IMR-90 (cell line): ENCODE measurements at regions of chr9 and their contacts with region 1.

Region 1: GRCh38 chr9:16417161-16417560 is 453.3 kb downstream of the BNC2 start:
- DNase-seq: peak; percentile 96
- ATAC-seq: peak; percentile 70
- H3K4me3 ChIP-seq: peak overlapping the region; percentile 20; the same call in 1 of the 2 replicates
- H3K27ac ChIP-seq: peak overlapping the region; percentile 54; the same call in 1 of the 2 replicates
- H3K4me1 ChIP-seq: peaks cover 14% of the 10 kb centered on the region
- H3K27me3 ChIP-seq: no peaks in the 10 kb centered on the region; the same call in 1 of the 2 replicates
- CTCF ChIP-seq: no peak
- POLR2A ChIP-seq: no peak
- RAD21 ChIP-seq: peak; percentile 30

Region 2: GRCh38 chr9:15873569-15874177 is 543.5 kb before region 1 on chr9:
- CTCF ChIA-PET with region 1: no interaction called
- POLR2A ChIA-PET with region 1: no interaction called
- dilution Hi-C with region 1: no loop called
- in situ Hi-C with region 1: no loop called
- intact Hi-C with region 1: loop called (anchors 10 kb)
- DNase-seq: peak; percentile 74
- ATAC-seq: peak; percentile 70; the same call in 1 of the 2 replicates
- H3K4me3 ChIP-seq: no peak overlapping the region
- H3K27ac ChIP-seq: no peak overlapping the region
- H3K4me1 ChIP-seq: no peaks in the 10 kb centered on the region; the same call in 1 of the 2 replicates
- H3K27me3 ChIP-seq: no peaks in the 10 kb centered on the region
- CTCF ChIP-seq: peak; percentile 82
- POLR2A ChIP-seq: no peak
- RAD21 ChIP-seq: peak; percentile 87

Region 3: DNA sequence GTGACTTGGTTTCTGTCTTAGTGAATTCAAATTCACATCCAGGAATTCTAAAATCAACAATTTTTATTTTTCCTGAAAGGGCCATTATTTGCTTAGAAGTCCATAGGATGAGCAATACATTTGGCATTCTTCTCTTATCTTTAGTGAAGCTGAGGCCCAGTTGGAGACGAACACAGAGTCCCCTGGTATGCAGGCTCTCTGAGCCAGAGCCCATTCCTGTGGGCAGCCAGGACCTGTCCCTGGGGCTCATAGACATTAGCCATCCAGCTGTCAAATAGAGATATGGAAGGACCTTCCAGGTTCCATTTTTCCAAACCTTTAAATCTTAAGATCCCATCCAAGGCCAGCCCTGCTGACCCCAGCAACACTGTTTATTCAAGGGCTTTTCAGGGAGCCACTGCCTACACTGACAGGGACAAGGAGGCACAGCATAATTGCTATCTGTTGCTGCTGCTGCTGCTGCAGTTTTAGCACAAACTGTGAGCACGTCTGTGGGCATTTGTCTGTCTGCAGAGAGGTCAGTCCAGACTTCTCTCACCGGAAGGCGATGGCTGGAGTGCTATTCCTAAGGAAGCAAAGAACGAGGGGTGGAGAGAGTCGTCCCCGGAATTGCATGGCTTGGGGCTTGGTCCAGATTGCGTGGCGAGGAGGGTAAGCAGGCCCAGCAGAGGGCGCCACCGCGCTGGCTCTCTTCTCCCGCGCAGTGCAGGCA is 225.3 kb before region 1 on chr9:
- CTCF ChIA-PET with region 1: no interaction called
- POLR2A ChIA-PET with region 1: no interaction called
- dilution Hi-C with region 1: no loop called
- in situ Hi-C with region 1: no loop called
- intact Hi-C with region 1: loop called (anchors 2 kb)
- DNase-seq: peak; percentile 87
- ATAC-seq: peak; percentile 89
- H3K4me3 ChIP-seq: peak overlapping the region; percentile 1; the same call in 1 of the 2 replicates
- H3K27ac ChIP-seq: peak overlapping the region; percentile 92
- H3K4me1 ChIP-seq: peaks cover 28% of the 10 kb centered on the region
- H3K27me3 ChIP-seq: no peaks in the 10 kb centered on the region
- CTCF ChIP-seq: peak; percentile 91
- POLR2A ChIP-seq: no peak
- RAD21 ChIP-seq: peak; percentile 95

Region 4: DNA sequence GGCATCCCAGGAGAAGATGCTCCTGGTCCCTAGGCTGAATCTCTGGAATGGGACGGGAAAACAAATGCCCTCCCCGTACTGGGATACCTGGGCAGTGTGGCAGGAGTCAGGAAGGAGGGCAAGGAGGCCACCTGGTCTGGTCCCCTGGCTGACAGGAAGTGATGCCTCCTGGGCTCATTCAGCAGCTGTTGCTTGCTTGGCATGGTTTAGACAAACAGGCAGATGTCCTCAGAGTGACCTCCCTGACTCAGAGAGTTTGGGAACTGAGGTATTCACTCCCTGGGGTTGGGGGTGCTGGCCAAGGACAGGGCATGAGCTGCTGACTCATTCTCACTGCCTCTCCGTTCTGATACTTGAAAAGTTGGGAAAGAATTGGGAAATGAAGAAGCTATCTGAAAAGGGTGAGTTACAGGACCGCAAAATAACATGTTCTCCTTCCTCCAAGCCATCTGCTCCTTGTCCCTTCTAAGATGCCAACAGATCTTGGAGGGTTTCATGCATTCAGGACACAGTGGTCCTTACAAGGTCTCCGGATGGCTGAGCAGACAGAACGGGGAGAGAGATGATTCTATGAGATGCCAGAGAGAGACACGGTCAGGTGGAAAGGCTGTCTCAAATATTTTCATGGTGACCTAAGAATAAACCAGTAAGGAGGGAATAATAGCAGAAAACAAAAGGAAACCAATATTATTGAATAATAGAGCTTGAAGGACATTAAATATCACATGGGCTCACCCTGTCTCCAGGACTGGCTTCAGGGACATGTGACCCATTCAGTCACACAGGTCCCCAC is 81.2 kb before region 1 on chr9:
- CTCF ChIA-PET with region 1: no interaction called
- POLR2A ChIA-PET with region 1: no interaction called
- dilution Hi-C with region 1: no loop called
- in situ Hi-C with region 1: no loop called
- intact Hi-C with region 1: loop called (anchors 5 kb)
- DNase-seq: peak; percentile 99
- ATAC-seq: peak; percentile 91
- H3K4me3 ChIP-seq: no peak overlapping the region
- H3K27ac ChIP-seq: peak overlapping the region; percentile 96
- H3K4me1 ChIP-seq: peaks cover 18% of the 10 kb centered on the region
- H3K27me3 ChIP-seq: no peaks in the 10 kb centered on the region
- CTCF ChIP-seq: no peak
- POLR2A ChIP-seq: no peak
- RAD21 ChIP-seq: peak; percentile 29

Region 5: DNA sequence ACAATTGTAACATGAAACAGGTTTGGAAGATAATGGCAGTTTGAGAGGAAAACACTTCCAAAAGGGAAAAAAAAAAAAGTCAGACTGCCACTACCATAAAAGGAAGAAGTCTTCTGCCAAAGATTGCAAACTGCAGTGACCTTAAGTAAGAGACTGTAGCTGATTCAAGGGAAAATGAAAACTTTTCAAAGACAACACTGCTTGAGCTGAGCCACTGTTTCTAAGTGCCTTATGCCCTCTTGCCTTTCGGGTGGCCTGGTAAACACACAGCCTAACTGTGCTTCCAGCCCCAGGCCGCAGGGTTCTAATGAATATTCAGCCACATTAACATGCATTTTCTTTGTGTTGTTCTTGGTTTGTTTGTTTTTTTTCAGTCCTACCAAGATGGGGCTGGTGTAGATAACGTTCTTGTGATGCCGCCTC is 98.7 kb after region 1 on chr9:
- CTCF ChIA-PET with region 1: no interaction called
- POLR2A ChIA-PET with region 1: no interaction called
- dilution Hi-C with region 1: no loop called
- in situ Hi-C with region 1: no loop called
- intact Hi-C with region 1: loop called (anchors 5 kb)
- DNase-seq: peak; percentile 84
- ATAC-seq: peak; percentile 81
- H3K4me3 ChIP-seq: no peak overlapping the region
- H3K27ac ChIP-seq: peak overlapping the region; percentile 100
- H3K4me1 ChIP-seq: peaks cover 18% of the 10 kb centered on the region
- H3K27me3 ChIP-seq: no peaks in the 10 kb centered on the region
- CTCF ChIP-seq: no peak
- POLR2A ChIP-seq: no peak
- RAD21 ChIP-seq: no peak

Region 6: DNA sequence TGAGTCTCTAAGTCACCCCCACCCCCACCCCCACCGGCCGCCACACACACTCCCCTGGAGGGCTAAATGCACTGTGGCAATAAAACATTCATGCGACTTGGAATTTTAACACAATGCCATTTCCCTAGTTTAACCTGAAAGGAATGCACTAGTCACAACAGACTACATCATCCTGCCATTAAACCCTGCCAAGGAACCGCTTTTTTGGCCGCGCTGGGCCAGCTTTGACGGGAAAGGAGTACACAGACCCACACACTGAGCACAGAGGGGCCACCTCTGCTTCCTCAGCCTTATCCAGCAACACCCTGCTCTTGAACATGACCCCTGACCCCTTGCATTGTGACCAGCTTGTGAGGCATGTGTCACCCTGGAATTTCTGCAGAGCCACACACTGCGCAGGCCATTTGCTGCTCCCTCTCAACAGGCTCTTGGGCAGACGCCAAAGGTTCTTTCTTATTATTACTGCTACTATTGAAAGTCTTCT is 288.0 kb after region 1 on chr9:
- CTCF ChIA-PET with region 1: no interaction called
- POLR2A ChIA-PET with region 1: no interaction called
- dilution Hi-C with region 1: no loop called
- in situ Hi-C with region 1: no loop called
- intact Hi-C with region 1: loop called (anchors 2 kb)
- DNase-seq: peak; percentile 97
- ATAC-seq: peak; percentile 80
- H3K4me3 ChIP-seq: peak overlapping the region; percentile 42
- H3K27ac ChIP-seq: peak overlapping the region; percentile 99
- H3K4me1 ChIP-seq: peaks cover 22% of the 10 kb centered on the region
- H3K27me3 ChIP-seq: no peaks in the 10 kb centered on the region
- CTCF ChIP-seq: no peak
- POLR2A ChIP-seq: no peak
- RAD21 ChIP-seq: no peak; the same call in 1 of the 2 replicates

Region 7: DNA sequence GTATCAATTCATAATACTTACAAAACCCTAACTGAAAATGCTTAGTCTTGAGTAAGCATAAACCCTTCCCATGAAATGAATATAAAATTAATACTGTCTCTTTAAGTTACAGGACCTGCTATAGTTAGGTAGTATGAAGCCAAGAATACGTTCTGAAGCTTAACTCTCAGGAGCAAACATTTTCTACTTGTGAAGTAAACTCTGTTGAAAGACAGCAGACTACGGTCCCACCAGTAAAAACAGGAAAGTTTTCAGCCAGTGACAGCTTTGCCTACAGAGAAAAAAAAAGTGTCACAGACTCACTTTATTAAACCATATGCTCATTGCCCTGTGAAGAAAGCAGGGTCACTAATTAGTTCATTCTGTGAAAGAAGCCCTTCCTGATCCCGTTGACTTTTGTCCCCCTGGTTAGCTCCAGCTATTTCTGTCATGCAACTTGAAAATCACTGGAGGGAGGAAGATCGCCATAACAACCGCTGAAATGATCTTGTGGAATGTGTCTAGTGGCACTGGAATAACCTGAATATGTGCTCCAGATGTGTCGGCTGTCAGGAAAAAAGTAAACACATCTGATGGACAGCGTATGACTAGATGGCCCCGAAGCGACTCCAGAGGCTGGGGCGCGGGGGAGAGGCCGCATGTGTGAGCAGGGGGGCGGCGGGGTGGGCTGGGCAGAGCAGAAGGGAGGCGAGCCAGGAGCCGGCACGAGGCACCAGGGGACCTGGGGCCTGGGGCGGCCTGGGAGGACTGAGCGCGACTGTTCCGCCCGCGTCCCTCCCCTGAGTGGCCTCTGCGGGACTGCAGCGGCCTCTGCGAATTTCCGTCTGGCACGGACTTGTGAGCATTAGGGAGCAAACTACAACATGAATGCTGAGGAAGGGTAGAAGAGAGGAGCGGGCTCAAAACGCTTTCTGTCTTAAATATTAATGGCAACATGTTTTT is 411.4 kb after region 1 on chr9:
- CTCF ChIA-PET with region 1: no interaction called
- POLR2A ChIA-PET with region 1: no interaction called
- dilution Hi-C with region 1: no loop called
- in situ Hi-C with region 1: no loop called
- intact Hi-C with region 1: loop called (anchors 5 kb)
- DNase-seq: peak; percentile 78
- ATAC-seq: peak; percentile 21
- H3K4me3 ChIP-seq: peak overlapping the region; percentile 22; the same call in 1 of the 2 replicates
- H3K27ac ChIP-seq: peak overlapping the region; percentile 93
- H3K4me1 ChIP-seq: peaks cover 22% of the 10 kb centered on the region
- H3K27me3 ChIP-seq: no peaks in the 10 kb centered on the region
- CTCF ChIP-seq: no peak
- POLR2A ChIP-seq: no peak
- RAD21 ChIP-seq: no peak